WTC11 (cell line): ENCODE measurements at regions of chr16 and their contacts with region 1.

Region 1: DNA sequence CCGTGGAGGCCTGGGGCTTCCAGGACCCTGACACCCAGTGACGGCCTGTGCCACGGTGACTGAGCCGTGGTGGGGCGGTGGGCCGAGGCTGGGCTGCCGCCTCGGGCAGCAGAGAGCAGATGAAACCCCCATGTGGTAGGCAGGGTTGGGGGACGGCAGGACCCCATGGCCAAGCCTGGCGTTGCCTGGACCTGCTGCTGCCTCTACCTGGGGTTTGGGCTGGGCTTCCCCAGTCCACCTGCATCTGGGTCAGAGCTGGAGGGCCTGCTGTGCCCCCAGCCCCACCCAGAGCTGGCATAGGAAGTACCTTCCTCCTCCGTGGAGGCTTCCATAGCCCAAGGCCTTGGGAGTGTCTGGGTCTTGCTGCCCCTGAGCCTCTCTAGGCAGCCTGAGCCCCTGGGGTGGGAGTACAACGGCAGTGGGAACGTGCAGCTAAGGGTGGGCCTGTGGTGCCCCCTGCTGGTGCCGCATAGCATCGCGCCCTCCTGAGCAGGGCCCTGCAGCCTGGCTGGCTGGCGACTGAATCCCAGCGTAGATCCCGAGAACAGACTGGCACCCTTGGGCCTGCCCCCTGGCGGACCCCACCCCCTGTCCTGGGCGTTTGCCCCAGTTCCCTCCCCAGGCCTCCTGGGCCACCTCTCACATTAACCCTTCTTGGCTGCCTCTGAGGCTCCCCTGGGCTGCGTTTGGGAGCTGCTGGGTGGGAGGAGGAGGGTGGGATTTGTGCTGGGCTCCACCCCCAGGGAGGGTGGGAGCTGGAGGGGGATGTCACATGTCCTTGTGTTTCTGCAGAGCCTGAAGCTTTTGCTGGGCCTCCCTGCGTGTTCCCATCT is 12.6 kb upstream of the ATP6V0C start:
- DNase-seq: peak; percentile 93
- ATAC-seq: peak; percentile 91
- H3K4me3 Mint-ChIP-seq: peak overlapping the region; percentile 49
- H3K27ac Mint-ChIP-seq: no peak overlapping the region
- H3K4me1 Mint-ChIP-seq: peaks cover 4% of the 10 kb centered on the region
- H3K27me3 Mint-ChIP-seq: no peaks in the 10 kb centered on the region
- CTCF ChIP-seq: peak; percentile 94

Region 2: GRCh38 chr16:2194852-2195321 is 306.2 kb before region 1 on chr16:
- CTCF ChIA-PET with region 1: interaction called, 36 read pairs
- POLR2A ChIA-PET with region 1: no interaction called
- DNase-seq: peak; percentile 73
- ATAC-seq: peak; percentile 73
- H3K4me3 Mint-ChIP-seq: peak overlapping the region; percentile 66
- H3K27ac Mint-ChIP-seq: no peak overlapping the region
- H3K4me1 Mint-ChIP-seq: peaks cover 4% of the 10 kb centered on the region; the same call in 1 of the 2 replicates
- H3K27me3 Mint-ChIP-seq: peaks cover 27% of the 10 kb centered on the region
- CTCF ChIP-seq: 0 out of 2 replicates have a peak, but pooled peaks have one; percentile 33

Region 3: DNA sequence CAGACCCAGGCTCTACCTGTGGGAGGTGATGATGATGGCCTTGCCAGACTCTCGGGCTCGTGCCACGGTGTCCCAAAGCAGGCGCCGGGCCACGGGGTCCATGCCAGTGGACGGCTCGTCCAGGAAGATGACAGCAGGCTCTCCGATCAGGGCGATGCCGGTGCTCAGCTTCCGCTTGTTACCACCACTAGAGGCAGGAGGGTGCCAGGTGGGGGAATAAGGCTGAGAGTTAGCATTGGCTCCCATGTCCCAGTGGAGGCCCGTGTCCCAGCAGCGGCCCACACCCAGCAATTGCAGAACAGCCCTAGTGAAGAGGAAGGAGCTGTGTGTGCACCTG is 222.9 kb before region 1 on chr16:
- CTCF ChIA-PET with region 1: interaction called, 18 read pairs
- POLR2A ChIA-PET with region 1: no interaction called
- DNase-seq: peak; percentile 41
- ATAC-seq: peak; percentile 78
- H3K4me3 Mint-ChIP-seq: no peak overlapping the region
- H3K27ac Mint-ChIP-seq: no peak overlapping the region
- H3K4me1 Mint-ChIP-seq: peaks cover 2% of the 10 kb centered on the region; the same call in 1 of the 2 replicates
- H3K27me3 Mint-ChIP-seq: no peaks in the 10 kb centered on the region
- CTCF ChIP-seq: no peak

Region 4: GRCh38 chr16:2459647-2460390 is 41.3 kb before region 1 on chr16 and contains the start of gene TEDC2:
- CTCF ChIA-PET with region 1: interaction called, 42 read pairs
- POLR2A ChIA-PET with region 1: interaction called, 13 read pairs
- DNase-seq: peak; percentile 99
- ATAC-seq: peak; percentile 96
- H3K4me3 Mint-ChIP-seq: peak within 1 kb of the TSS; percentile 90
- H3K27ac Mint-ChIP-seq: peak within 1 kb of the TSS; percentile 76
- H3K4me1 Mint-ChIP-seq: peaks cover 10% of the 10 kb centered on the region
- H3K27me3 Mint-ChIP-seq: no peaks in the 10 kb centered on the region
- CTCF ChIP-seq: no peak
- total RNA-seq, gene TEDC2: 51.7 to 61.6 TPM (median 51.9 TPM) in 3 replicates

Region 5: DNA sequence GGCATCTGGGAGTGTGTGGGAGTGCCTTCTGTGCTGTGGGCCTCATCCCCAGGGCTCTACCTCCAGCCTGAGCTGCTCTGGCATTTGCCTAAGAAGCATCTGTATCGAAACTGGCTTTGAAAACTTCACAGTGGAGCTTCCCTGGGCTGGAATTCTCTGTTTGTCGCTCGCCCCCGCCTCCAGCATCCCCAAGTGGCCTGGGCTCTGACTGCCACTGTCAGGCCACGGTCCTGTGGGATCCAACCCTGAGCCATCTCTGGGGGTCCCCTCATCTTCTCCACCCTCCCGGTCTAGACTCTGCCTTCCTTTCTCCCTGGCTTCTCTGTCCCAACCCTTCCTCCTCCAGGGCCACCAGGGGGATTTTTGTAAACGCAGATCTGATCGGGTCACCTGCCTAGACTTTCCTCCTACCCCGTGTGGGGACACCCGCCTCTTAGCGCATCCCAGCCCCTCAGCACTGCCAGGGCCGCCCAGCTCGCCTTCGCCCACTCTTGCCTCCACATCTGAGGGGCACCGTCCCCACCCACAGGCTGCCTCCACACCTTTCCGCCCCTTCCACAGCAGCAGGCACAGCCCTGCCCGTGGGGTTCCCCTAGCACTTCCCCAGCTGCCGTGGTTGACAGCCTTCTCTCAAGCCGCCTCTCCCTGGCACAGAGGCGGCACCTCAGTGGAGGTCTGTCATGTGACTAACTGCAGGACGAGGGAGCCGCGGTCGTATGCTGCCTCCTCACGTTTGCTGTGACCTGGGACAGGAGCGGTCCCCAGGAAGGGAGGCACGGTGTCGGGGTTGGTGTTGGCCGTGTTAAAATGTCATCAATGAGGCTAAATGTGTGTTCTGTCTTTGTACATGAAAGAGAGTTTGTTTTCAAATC is 14.3 kb before region 1 on chr16:
- CTCF ChIA-PET with region 1: interaction called, 19 read pairs
- POLR2A ChIA-PET with region 1: no interaction called
- DNase-seq: no peak
- ATAC-seq: peak; percentile 15; the same call in 1 of the 2 replicates
- H3K4me3 Mint-ChIP-seq: no peak overlapping the region
- H3K27ac Mint-ChIP-seq: peak overlapping the region; percentile 54
- H3K4me1 Mint-ChIP-seq: 0 out of 2 replicates have a peak, but pooled peaks cover 4% of the 10 kb centered on the region
- H3K27me3 Mint-ChIP-seq: no peaks in the 10 kb centered on the region; the same call in 1 of the 2 replicates
- CTCF ChIP-seq: no peak

Region 6: GRCh38 chr16:2531767-2532493 is 30.8 kb after region 1 on chr16:
- CTCF ChIA-PET with region 1: interaction called, 11 read pairs
- POLR2A ChIA-PET with region 1: no interaction called
- DNase-seq: peak; percentile 98
- ATAC-seq: peak; percentile 88
- H3K4me3 Mint-ChIP-seq: peak overlapping the region; percentile 94
- H3K27ac Mint-ChIP-seq: peak overlapping the region; percentile 98
- H3K4me1 Mint-ChIP-seq: 0 out of 2 replicates have a peak, but pooled peaks cover 5% of the 10 kb centered on the region
- H3K27me3 Mint-ChIP-seq: peaks cover 8% of the 10 kb centered on the region; the same call in 1 of the 2 replicates
- CTCF ChIP-seq: no peak